IMR-90 (cell line): ENCODE measurements at regions of chr12 and their contacts with region 1.

Region 1: DNA sequence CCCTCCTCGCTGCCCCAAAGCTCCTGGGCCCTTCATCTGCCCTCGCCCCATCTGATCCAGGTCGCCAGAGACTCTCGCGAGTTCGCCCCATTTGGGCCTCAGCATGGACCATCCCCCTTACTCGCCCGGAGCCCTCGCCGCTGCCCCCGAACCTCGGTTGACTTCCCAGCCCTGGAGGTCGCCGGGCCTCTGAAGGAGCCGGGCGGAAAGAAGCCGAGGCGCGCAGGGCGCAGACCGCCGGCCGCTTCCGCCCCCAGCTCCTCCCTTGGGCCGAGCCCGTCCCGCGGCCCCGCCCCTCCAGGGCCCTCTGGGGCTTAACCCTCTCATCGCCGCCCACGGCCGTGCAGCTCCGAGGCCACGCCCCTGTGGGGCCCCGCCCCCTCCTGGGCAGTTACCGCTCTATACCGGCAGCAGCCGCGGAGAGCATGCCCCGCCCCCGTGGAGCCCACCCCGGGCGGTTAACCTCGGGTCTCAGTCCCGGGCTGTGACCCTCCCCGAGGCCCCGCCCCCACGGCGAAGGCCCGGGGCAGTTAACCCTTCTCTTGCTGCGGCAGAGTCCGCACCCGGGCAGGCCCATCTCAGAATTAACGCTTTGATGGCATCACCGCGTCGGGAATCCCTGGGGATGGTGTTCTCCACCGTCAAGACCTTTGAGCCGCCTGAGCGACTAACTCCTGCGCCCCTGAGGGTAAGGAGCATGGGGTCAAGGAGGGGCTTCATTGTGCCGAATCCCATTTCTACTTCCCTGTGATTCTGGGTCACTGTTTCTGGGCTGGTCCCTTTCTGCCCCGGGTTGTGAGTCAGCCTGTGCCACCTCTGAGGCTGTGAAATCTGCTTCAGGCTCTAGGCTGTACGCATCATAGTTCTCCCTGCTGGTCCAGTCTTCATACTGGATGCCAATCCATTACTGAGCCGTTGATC is at the start of gene SPSB2:
- DNase-seq: peak; percentile 92
- ATAC-seq: peak; percentile 87
- H3K4me3 ChIP-seq: peak within 1 kb of the TSS; percentile 95
- H3K27ac ChIP-seq: peak within 1 kb of the TSS; percentile 91
- H3K4me1 ChIP-seq: peaks cover 15% of the 10 kb centered on the region
- H3K27me3 ChIP-seq: no peaks in the 10 kb centered on the region
- CTCF ChIP-seq: no peak
- POLR2A ChIP-seq: no peak
- RAD21 ChIP-seq: no peak
- total RNA-seq, gene SPSB2: 1.1 and 1.3 TPM in 2 replicates

Region 2: DNA sequence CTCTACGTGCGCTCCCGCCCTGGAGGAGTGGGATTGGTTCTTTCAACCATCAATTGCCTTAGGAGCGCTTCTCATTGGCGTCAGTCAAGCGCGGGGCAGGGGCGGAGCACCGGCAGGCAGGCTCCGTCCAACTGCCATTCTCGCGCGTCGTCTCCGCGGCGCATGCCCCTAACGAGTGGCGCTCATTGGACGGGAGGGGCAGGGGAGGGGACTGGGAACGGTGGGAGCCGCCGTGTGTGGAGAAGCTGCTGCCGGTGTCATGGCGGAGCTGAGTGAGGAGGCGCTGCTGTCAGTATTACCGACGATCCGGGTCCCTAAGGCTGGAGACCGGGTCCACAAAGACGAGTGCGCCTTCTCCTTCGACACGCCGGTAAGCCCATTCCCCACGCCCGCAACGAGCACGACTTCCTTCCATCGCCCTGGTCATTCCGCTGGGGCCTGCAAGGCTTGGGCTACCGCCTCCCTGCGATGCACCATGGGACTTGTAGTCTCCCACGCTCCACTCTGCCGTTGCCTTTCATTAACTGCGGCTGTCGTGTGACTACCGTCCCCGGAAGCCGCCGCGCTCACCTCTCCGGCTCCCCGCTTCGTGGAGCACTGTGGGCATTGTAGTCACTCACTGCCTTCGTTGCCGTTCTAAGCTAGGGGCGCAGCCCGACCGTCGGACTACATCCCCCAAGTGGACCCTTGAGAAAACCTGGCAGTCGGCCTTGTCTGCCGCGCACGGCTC is 21.3 kb before region 1 on chr12 and contains the start of gene USP5:
- CTCF ChIA-PET with region 1: interaction called, 10 read pairs
- POLR2A ChIA-PET with region 1: interaction called, 6 read pairs
- dilution Hi-C with region 1: no loop called
- in situ Hi-C with region 1: no loop called
- intact Hi-C with region 1: loop called (anchors 2 kb)
- DNase-seq: peak; percentile 100
- ATAC-seq: peak; percentile 84
- H3K4me3 ChIP-seq: peak within 1 kb of the TSS; percentile 63
- H3K27ac ChIP-seq: peak within 1 kb of the TSS; percentile 87
- H3K4me1 ChIP-seq: peaks cover 5% of the 10 kb centered on the region
- H3K27me3 ChIP-seq: no peaks in the 10 kb centered on the region
- CTCF ChIP-seq: no peak
- POLR2A ChIP-seq: no peak
- RAD21 ChIP-seq: no peak
- total RNA-seq, gene USP5: 119 and 125 TPM in 2 replicates

Region 3: DNA sequence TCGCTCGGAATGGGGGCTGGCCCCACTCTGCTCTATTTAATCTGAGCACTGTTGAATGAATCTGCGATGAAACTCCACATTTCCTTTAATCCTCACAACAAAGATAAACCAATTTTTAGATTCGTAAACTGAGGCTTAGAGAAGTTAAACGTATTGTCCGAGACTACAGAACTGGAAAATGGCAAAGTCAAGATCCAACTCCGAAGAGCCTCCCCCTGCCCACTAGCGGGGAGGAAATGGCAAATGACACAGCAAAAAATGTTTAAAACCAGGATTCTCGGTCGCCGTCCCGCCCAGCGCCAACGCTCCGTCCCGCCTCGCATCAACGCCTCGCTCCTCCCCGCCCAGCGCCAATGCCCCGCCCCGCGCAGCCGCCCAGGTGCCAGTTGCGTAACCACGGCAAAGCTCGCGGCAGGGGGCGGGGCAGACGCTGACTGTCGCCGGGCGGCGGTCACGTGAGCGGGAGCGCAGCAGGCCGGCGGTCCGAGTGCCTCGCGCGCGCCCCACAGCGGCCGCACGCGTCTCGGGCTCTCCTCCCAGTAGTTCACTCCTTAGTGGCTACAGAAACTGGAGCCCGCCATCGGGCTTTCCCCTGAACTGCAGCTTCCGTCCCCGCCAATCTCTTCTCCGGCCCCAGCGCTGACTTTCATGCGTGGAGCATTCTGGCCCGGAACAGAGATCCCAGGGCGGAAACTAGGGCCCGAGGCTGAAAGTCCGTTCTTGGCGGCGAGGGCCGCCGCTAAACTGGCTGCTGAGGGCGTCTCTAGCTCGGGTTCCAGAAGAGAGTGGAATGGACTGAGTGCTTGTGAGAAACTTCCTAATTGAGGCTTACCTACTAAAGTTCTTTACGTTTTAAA is 17.7 kb after region 1 on chr12:
- CTCF ChIA-PET with region 1: interaction called, 17 read pairs
- POLR2A ChIA-PET with region 1: interaction called, 12 read pairs
- dilution Hi-C with region 1: no loop called
- in situ Hi-C with region 1: no loop called
- intact Hi-C with region 1: loop called (anchors 1 kb)
- DNase-seq: peak; percentile 94
- ATAC-seq: peak; percentile 97
- H3K4me3 ChIP-seq: peak overlapping the region; percentile 39
- H3K27ac ChIP-seq: peak overlapping the region; percentile 90
- H3K4me1 ChIP-seq: peaks cover 2% of the 10 kb centered on the region; the same call in 1 of the 2 replicates
- H3K27me3 ChIP-seq: no peaks in the 10 kb centered on the region
- CTCF ChIP-seq: peak; percentile 96
- POLR2A ChIP-seq: peak; percentile 92
- RAD21 ChIP-seq: peak; percentile 53

Region 4: GRCh38 chr12:6925540-6926279 is 52.4 kb after region 1 on chr12:
- CTCF ChIA-PET with region 1: interaction called, 3 read pairs
- POLR2A ChIA-PET with region 1: interaction called, 3 read pairs
- dilution Hi-C with region 1: no loop called
- in situ Hi-C with region 1: no loop called
- intact Hi-C with region 1: loop called (anchors 2 kb)
- DNase-seq: peak; percentile 90
- ATAC-seq: peak; percentile 28
- H3K4me3 ChIP-seq: peak overlapping the region; percentile 25
- H3K27ac ChIP-seq: peak overlapping the region; percentile 93
- H3K4me1 ChIP-seq: peaks cover 25% of the 10 kb centered on the region
- H3K27me3 ChIP-seq: no peaks in the 10 kb centered on the region
- CTCF ChIP-seq: no peak
- POLR2A ChIP-seq: no peak
- RAD21 ChIP-seq: no peak

Region 5: GRCh38 chr12:7108796-7109571 is 235.6 kb after region 1 on chr12 and contains the start of gene C1RL:
- CTCF ChIA-PET with region 1: no interaction called
- POLR2A ChIA-PET with region 1: no interaction called
- dilution Hi-C with region 1: no loop called
- in situ Hi-C with region 1: no loop called
- intact Hi-C with region 1: loop called (anchors 5 kb)
- DNase-seq: peak; percentile 77
- ATAC-seq: peak; percentile 58
- H3K4me3 ChIP-seq: peak within 1 kb of the TSS; percentile 66
- H3K27ac ChIP-seq: peak within 1 kb of the TSS; percentile 97
- H3K4me1 ChIP-seq: peaks cover 5% of the 10 kb centered on the region; the same call in 1 of the 2 replicates
- H3K27me3 ChIP-seq: no peaks in the 10 kb centered on the region
- CTCF ChIP-seq: peak; percentile 93
- POLR2A ChIP-seq: peak; percentile 15; the same call in 1 of the 2 replicates
- RAD21 ChIP-seq: peak; percentile 79
- total RNA-seq, gene C1RL: 7.5 and 9.1 TPM in 2 replicates